Activated naive CD4-positive, alpha-beta T cell treated with anti-CD3 and anti-CD28 coated beads for 36 hours (primary cell): ENCODE measurements at regions of chr2 and their contacts with region 1.

Region 1: GRCh38 chr2:190534310-190535120 is at the start of gene NEMP2:
- DNase-seq: peak; percentile 82
- H3K4me3 Mint-ChIP-seq: peak within 1 kb of the TSS; percentile 96
- H3K27ac Mint-ChIP-seq: peak within 1 kb of the TSS; percentile 100
- H3K4me1 Mint-ChIP-seq: peaks cover 51% of the 10 kb centered on the region
- H3K27me3 Mint-ChIP-seq: no peaks in the 10 kb centered on the region
- total RNA-seq, gene NEMP2: 32.9 to 34.2 TPM

Region 2: DNA sequence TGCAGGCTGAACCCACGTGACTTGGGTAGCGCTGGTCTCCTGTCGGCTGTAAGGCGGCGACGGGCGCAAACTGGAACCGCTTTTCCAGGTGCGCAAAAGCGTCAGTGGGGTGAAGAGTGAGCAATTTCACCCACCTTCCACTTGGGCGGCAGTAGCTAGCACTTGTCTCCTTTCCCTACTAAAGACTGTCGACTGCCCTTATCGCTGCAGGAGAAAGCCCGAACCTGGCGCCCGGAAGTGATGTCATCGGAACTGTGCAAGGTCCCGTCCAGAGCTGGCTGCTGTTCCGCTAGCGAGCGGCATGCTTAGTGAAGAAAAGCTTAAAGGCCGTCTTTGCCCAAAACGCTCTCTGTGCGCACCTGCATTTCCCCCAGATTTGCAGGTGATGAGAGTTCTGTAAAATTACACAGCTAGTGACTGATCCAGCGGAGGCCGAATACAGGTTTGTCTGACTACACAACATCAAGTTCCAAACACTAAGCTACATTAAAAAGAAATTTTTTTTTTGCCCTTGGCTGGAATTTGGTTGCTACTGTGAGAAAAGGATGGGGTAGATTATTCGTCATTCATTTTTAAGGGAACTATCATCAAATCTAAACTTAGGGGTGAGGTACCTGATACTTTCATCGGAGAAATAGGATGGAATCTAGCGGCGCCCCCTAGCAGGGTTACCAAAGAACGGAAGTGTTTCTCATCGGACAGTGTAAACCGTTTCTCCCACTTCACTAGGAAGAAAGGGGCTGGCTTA is 771.8 kb before region 1 on chr2 and contains the start of gene OSGEPL1:
- CTCF ChIA-PET with region 1: no interaction called
- intact Hi-C with region 1: loop called (anchors 1 kb)
- DNase-seq: peak; percentile 95
- H3K4me3 Mint-ChIP-seq: peak within 1 kb of the TSS; percentile 92
- H3K27ac Mint-ChIP-seq: peak within 1 kb of the TSS; percentile 97
- H3K4me1 Mint-ChIP-seq: peaks cover 13% of the 10 kb centered on the region
- H3K27me3 Mint-ChIP-seq: no peaks in the 10 kb centered on the region
- total RNA-seq, gene OSGEPL1: 15.5 to 15.8 TPM

Region 3: DNA sequence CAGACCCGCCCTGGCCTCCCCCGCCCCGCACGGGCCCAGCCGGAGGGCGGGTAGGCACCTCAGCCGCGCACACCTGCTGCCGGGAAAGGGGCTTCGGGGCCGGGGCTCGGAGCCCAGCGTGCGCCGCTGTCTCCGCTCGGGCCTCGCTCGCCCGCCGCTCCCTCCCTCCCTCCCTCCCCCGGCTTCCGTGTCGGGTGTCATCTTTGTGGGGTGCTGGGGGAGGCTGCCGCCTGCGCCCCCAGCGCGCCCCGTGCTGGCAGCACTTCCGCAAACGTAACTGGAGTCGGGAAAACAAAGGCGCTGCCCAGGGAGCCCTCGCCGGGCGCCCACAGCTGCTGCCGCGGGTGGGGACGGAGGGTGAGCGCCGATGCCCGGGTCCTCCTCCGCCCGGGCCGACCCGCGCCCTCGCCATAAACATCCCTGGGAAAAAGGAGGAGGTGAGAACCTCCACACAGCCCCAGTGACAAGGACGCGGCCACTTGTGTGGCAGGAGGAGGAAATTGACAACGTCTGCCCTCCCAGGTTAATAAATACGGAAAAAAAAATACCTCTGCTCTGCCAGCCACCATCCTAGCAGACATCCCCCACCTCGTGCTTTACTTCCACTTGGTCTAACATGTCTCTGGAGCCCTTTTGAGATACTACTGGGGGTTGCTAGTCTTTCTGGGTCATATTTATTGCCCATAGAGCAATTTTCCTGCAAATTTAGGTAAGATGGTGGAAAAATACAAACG is 125.8 kb before region 1 on chr2:
- CTCF ChIA-PET with region 1: no interaction called
- intact Hi-C with region 1: loop called (anchors 1 kb)
- DNase-seq: peak; percentile 71
- H3K4me3 Mint-ChIP-seq: peak overlapping the region; percentile 84
- H3K27ac Mint-ChIP-seq: peak overlapping the region; percentile 90
- H3K4me1 Mint-ChIP-seq: peaks cover 46% of the 10 kb centered on the region
- H3K27me3 Mint-ChIP-seq: no peaks in the 10 kb centered on the region

Region 4: GRCh38 chr2:190648289-190649034 is 113.9 kb after region 1 on chr2:
- CTCF ChIA-PET with region 1: no interaction called
- intact Hi-C with region 1: loop called (anchors 1 kb)
- DNase-seq: peak; percentile 81
- H3K4me3 Mint-ChIP-seq: peak overlapping the region; percentile 68
- H3K27ac Mint-ChIP-seq: peak overlapping the region; percentile 76
- H3K4me1 Mint-ChIP-seq: peaks cover 43% of the 10 kb centered on the region
- H3K27me3 Mint-ChIP-seq: no peaks in the 10 kb centered on the region

Region 5: DNA sequence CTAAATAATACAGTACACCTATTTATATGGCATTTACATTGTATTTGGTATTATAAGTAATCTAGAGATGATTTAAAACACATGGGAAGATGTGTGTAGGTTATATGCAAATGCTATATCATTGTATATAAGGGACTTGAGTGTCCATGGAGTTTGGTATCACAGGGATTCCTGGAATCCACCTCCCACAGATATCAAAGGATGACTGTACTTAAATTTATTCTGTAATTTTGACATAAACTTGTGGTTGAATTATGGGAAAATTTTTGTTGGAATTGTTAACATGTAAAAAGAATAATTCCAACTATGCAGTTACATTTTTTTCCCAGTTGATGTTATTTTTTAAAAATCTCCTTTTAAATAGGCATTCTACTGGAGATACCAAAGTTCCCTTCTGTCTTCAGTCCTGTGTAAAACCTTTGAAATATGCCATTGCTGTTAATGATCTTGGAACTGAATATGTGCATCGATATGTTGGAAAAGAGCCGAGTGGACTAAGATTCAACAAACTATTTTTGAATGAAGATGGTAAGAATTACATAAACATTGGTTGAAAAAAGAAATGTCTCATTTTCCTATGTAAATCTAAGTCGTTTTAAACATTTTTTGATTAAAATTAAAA is 370.2 kb after region 1 on chr2:
- CTCF ChIA-PET with region 1: no interaction called
- intact Hi-C with region 1: no loop called
- DNase-seq: no peak
- H3K4me3 Mint-ChIP-seq: no peak overlapping the region
- H3K27ac Mint-ChIP-seq: no peak overlapping the region
- H3K4me1 Mint-ChIP-seq: peaks cover 34% of the 10 kb centered on the region
- H3K27me3 Mint-ChIP-seq: no peaks in the 10 kb centered on the region

Region 6: GRCh38 chr2:191020221-191020741 is 485.8 kb after region 1 on chr2:
- CTCF ChIA-PET with region 1: no interaction called
- intact Hi-C with region 1: loop called (anchors 2 kb)
- DNase-seq: peak; percentile 93
- H3K4me3 Mint-ChIP-seq: no peak overlapping the region
- H3K27ac Mint-ChIP-seq: no peak overlapping the region
- H3K4me1 Mint-ChIP-seq: peaks cover 36% of the 10 kb centered on the region
- H3K27me3 Mint-ChIP-seq: no peaks in the 10 kb centered on the region